ENCODE measurements at regions of chr7 and their contacts with region 1.

Region 1: DNA sequence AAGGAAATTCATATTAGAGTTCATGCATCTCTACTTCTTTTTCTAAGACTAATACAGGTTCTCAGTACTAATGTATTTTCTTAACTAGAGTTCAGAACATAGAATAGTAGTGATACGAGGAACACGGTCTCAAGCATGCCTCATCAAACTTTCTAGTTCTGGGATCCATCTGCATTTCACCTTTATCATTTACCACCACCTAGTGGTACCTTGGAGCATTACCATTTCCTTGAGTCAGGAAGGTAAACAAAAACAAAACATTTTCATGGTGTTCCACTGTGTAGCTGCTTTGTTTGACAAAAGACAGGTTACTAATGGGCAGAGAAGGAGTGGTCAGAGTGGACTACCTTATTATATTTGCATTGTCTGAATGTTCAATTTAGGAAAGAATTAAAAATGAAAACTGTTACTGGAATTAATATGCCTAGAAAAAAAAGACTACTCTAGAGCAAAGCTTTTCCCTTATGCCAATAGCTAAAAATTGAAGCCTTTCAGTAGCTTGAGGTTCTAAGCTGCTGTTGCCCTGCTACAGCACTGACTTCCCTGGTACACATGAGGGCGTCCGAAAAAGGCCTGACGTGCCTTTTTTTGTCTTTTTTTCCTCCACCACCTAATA is 44.5 kb downstream of the STARD3NL start:
- H3K4me3 ChIP-seq: no peak overlapping the region
- H3K27ac ChIP-seq: no peak overlapping the region
- H3K4me1 ChIP-seq: no peaks in the 10 kb centered on the region
- CTCF ChIP-seq: 0 out of 2 replicates have a peak, but pooled peaks have one; percentile 27

Region 2: GRCh38 chr7:37901236-37901827 is 321.3 kb before region 1 on chr7:
- CTCF ChIA-PET with region 1: interaction called, 20 read pairs
- POLR2A ChIA-PET with region 1: no interaction called
- H3K4me3 ChIP-seq: no peak overlapping the region
- H3K27ac ChIP-seq: no peak overlapping the region
- H3K4me1 ChIP-seq: no peaks in the 10 kb centered on the region
- CTCF ChIP-seq: peak; percentile 44; the same call in 1 of the 2 replicates

Region 3: DNA sequence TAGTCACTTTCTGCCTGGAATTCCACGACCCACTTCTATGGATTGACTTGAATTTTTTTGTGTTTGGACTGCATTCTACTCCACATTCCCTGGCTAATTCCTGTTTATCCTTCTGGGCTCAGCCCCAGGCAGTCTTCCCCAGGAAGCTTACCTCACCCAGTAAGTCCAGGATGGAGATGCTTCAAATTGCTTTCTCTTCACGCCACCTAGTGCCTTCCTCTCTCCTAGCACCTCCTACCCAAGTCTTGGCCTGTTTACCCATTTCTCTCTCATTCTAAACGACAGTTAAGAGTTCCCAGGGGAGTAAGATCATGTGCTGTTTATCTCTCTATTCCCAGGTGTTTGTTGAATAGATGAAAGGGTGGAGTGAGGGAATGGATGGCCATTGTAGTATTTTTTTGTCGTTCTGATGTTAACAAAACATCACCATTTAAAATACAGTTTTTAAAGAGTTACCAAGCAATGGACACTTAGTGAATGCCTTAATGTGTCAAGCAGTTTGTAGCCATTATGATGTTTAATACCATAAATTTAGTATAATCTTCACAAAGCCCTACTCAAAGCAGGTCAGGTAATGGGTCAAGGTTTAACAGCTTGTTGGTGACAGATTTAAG is 96.3 kb after region 1 on chr7:
- CTCF ChIA-PET with region 1: interaction called, 112 read pairs
- POLR2A ChIA-PET with region 1: no interaction called
- H3K4me3 ChIP-seq: no peak overlapping the region
- H3K27ac ChIP-seq: no peak overlapping the region
- H3K4me1 ChIP-seq: no peaks in the 10 kb centered on the region; the same call in 1 of the 2 replicates
- CTCF ChIP-seq: peak; percentile 75

Measured in HEK293 (cell line).